ENCODE measurements at regions of chr4 and their contacts with region 1.

Region 1: GRCh38 chr4:76511947-76512346 is 76.9 kb downstream of the SHROOM3 start:
- DNase-seq: no peak
- H3K4me3 ChIP-seq: no peak overlapping the region
- H3K27ac ChIP-seq: peak overlapping the region; percentile 63
- H3K4me1 ChIP-seq: no peaks in the 10 kb centered on the region
- H3K27me3 ChIP-seq: no peaks in the 10 kb centered on the region
- CTCF ChIP-seq: no peak

Region 2: GRCh38 chr4:76579610-76580375 is 67.8 kb after region 1 on chr4:
- intact Hi-C with region 1: no loop called
- DNase-seq: no peak
- H3K4me3 ChIP-seq: peak overlapping the region; percentile 6
- H3K27ac ChIP-seq: peak overlapping the region; percentile 64
- H3K4me1 ChIP-seq: peaks cover 5% of the 10 kb centered on the region
- H3K27me3 ChIP-seq: no peaks in the 10 kb centered on the region
- CTCF ChIP-seq: no peak

Region 3: GRCh38 chr4:76748649-76749048 is 236.7 kb after region 1 on chr4:
- intact Hi-C with region 1: loop called (anchors 2 kb)
- DNase-seq: peak; percentile 76
- H3K4me3 ChIP-seq: no peak overlapping the region
- H3K27ac ChIP-seq: no peak overlapping the region
- H3K4me1 ChIP-seq: no peaks in the 10 kb centered on the region
- H3K27me3 ChIP-seq: no peaks in the 10 kb centered on the region
- CTCF ChIP-seq: no peak

Measured in colonic mucosa (tissue), 4 donors.